Ovary (tissue), 10 donors: ENCODE measurements at regions of chr17 and their contacts with region 1.

Region 1: DNA sequence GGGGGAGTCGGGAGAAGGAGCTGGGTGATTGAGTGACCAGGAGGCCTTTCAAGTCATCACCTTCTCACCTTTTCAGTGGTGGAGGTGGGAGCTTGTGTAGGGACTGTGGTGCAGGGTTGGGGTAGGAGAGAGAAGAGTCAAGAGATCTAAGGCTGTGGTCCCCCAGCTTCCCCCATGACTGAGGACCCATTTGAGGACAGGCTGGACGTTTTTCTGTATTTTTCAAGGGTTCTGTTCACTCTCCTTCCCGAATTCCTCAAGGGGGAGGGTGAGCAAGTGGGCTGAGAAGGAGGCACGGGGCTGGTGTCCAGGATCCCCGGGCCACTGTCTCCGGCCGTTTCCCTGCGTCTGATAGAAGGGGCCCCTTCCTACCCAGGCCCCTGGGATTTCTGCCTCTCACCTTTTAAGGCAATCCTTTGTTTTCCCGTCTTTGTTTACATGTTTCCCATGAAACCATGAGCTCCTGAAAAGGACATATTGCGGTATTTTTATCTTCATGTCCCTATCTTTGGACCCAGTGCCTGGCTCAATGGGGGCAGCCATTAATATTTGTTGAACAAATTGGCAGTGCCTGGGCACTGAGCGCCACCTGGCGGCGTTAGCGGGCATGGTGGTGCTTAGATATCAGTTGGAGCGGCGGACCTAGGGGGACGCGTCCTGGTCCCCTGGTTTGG is 9.2 kb upstream of the CD300A start:
- DNase-seq: peak; percentile 69 to 90 (median 87)
- H3K4me3 ChIP-seq: no peak overlapping the region
- H3K27ac ChIP-seq: no peak overlapping the region
- H3K4me1 ChIP-seq: peaks cover 21% of the 10 kb centered on the region
- H3K27me3 ChIP-seq: no peaks in the 10 kb centered on the region
- CTCF ChIP-seq: peak; percentile 83 to 98 (median 96)
- EP300 ChIP-seq: no peak
- POLR2A ChIP-seq: peak; percentile 56

Region 2: GRCh38 chr17:74206332-74206818 is 250.9 kb before region 1 on chr17:
- intact Hi-C with region 1: loop called in 3 of 4 experiments (anchors 5 kb)
- DNase-seq: no peak
- H3K4me3 ChIP-seq: no peak overlapping the region
- H3K27ac ChIP-seq: no peak overlapping the region
- H3K4me1 ChIP-seq: peaks cover 11% of the 10 kb centered on the region
- H3K27me3 ChIP-seq: no peaks in the 10 kb centered on the region
- CTCF ChIP-seq: no peak
- EP300 ChIP-seq: no peak
- POLR2A ChIP-seq: no peak

Region 3: DNA sequence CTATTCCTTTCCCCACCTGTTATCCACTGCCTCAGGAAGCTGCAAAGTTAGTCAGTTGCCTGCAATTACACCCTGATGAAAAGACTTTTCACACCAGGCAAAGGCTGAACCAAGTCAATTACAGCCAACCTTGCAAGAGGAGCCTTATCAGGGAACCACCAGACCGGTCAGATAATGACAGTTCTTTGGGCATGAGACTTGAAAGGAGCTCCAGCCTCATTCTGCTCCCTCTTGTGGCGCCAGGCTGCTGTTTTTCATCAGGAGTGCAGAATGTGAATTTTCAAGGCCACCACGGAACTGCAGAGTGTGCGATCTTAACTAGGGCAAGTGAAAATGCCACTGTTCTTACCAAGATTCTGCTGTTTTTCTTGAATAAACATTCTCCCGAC is 160.7 kb before region 1 on chr17:
- intact Hi-C with region 1: loop called in 1 of 4 experiments (anchors 10 kb)
- DNase-seq: peak; percentile 73 to 83 (median 76)
- H3K4me3 ChIP-seq: no peak overlapping the region
- H3K27ac ChIP-seq: no peak overlapping the region
- H3K4me1 ChIP-seq: peaks cover 2% of the 10 kb centered on the region
- H3K27me3 ChIP-seq: no peaks in the 10 kb centered on the region
- CTCF ChIP-seq: peak; percentile 47 to 65 (median 62)
- EP300 ChIP-seq: no peak
- POLR2A ChIP-seq: no peak

Region 4: DNA sequence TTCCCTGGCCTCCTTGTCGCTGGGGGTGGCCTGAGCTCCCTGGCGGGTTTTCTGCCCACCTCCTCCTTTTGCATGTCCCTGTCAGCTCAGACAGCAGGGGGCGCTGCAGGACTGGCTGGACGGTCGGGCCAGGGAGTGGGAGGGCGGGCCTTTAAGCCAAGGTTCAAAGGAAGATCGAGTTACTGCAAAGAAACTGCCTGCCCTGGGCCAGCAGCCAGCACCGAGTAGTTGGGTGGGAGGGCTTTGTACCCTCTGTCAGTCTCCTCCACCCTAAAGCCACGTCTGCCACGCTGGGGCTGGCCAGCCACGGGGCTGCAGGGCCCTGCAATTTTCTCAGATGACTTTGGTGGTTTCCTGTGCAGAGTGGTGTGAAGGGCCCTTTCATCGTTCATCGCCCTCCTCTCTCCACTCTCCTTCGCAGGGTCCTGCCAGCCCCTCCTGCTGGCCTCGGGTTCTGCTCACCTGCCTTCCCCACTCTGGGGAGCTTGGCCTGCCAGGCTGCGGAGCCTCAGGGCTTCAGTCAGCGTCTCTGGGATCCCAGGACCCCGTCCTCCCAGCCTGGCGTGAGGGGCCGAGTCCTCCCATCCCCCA is 77.7 kb before region 1 on chr17:
- intact Hi-C with region 1: loop called (anchors 1 to 2 kb)
- DNase-seq: peak; percentile 91 to 97 (median 96)
- H3K4me3 ChIP-seq: no peak overlapping the region
- H3K27ac ChIP-seq: peak overlapping the region; percentile 0 to 61
- H3K4me1 ChIP-seq: peaks cover 2% of the 10 kb centered on the region
- H3K27me3 ChIP-seq: no peaks in the 10 kb centered on the region
- CTCF ChIP-seq: peak; percentile 93 to 98 (median 97)
- EP300 ChIP-seq: no peak
- POLR2A ChIP-seq: peak; percentile 17

Region 5: DNA sequence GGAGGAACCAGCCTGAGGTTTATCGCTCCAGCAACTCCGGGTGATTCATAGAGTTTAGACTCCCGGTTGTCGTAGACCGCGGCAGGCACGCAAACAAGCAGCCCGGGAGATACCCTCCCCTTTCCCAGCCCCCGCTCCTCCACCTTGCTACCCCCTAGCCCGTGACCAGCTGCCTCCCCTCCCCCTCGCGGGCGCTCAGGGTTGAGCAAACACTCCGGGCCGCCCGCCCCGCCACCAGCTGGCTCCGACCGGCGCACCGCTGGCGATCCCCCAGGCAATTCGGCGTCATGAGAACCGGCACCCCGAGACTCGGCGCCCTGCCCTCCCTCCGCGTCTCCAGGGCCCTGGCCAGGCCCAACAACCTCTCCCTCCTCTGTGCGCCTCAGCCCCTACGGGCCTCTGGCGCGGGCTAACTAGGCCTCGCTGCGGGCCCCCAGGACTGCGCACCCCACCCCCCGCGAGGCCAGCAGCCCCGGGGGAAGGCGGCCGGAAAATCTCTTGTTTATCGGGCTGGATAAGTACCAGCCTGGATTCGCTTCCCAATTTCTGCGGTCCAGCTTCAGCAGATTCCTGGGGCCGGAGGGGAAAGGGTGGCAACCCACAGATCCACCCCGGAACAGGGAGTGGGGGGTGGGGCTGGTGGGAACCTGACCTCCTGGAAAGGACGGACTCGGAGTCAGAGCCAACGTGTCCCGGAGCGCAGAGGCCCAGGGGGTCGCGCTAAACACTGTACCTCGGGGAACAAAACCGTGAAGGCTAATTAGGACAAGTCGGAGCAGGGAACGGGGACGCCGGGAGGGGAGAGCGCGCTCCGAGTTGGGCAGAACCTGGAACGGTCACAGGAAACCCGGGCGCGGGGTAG is 26.3 kb before region 1 on chr17:
- intact Hi-C with region 1: loop called in 2 of 4 experiments (anchors 2 kb)
- DNase-seq: peak; percentile 96 to 98 (median 98)
- H3K4me3 ChIP-seq: peak overlapping the region; percentile 52
- H3K27ac ChIP-seq: peak overlapping the region; percentile 77 to 96
- H3K4me1 ChIP-seq: peaks cover 22% of the 10 kb centered on the region
- H3K27me3 ChIP-seq: no peaks in the 10 kb centered on the region
- CTCF ChIP-seq: peak in 2 of 3 donors; percentile 17 to 21
- EP300 ChIP-seq: no peak
- POLR2A ChIP-seq: peak; percentile 58